ENCODE measurements at regions of chr3 and their contacts with region 1.

Region 1: GRCh38 chr3:27368831-27369607 is at the start of gene NEK10:
- DNase-seq: peak; percentile 88
- H3K4me3 Mint-ChIP-seq: peak within 1 kb of the TSS; percentile 89
- H3K27ac Mint-ChIP-seq: peak within 1 kb of the TSS; percentile 52
- H3K4me1 Mint-ChIP-seq: peaks cover 16% of the 10 kb centered on the region
- H3K27me3 Mint-ChIP-seq: peaks cover 4% of the 10 kb centered on the region
- total RNA-seq, gene NEK10: 0.54 and 0.57 TPM in 2 replicates

Region 2: DNA sequence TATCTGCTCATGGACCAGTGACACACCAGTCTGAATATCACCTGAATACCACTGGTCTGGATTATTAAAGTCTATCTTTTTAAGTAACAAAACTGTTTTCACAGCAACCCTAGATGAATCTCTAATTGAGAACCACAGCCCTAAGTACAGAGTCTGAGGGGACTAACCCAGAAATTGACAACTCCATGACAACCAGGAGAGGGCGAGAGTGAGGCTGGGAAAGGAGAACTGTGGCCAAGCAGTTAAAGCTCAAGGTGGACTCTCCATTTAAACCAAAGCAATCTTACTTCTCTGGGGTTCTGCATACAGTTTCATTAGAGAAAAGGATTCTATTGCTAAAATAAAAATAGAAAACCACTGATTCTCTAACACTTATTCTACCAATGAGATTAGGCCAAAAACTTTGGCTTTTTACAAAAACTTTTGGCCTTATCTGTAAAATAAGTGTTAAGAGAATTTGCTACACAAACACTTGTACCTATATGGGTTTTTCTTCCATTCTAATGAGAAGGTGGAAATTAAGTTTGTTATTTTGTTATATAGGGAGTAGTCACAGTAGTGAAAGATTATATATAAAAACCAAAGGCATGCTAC is 11.3 kb before region 1 on chr3:
- intact Hi-C with region 1: loop called (anchors 1 kb)
- DNase-seq: peak; percentile 35
- H3K4me3 Mint-ChIP-seq: no peak overlapping the region
- H3K27ac Mint-ChIP-seq: no peak overlapping the region
- H3K4me1 Mint-ChIP-seq: peaks cover 24% of the 10 kb centered on the region
- H3K27me3 Mint-ChIP-seq: peaks cover 16% of the 10 kb centered on the region

Region 3: GRCh38 chr3:27380433-27381357 is 11.7 kb after region 1 on chr3:
- intact Hi-C with region 1: loop called (anchors 1 kb)
- DNase-seq: no peak
- H3K4me3 Mint-ChIP-seq: no peak overlapping the region
- H3K27ac Mint-ChIP-seq: no peak overlapping the region
- H3K4me1 Mint-ChIP-seq: no peaks in the 10 kb centered on the region
- H3K27me3 Mint-ChIP-seq: no peaks in the 10 kb centered on the region

Region 4: DNA sequence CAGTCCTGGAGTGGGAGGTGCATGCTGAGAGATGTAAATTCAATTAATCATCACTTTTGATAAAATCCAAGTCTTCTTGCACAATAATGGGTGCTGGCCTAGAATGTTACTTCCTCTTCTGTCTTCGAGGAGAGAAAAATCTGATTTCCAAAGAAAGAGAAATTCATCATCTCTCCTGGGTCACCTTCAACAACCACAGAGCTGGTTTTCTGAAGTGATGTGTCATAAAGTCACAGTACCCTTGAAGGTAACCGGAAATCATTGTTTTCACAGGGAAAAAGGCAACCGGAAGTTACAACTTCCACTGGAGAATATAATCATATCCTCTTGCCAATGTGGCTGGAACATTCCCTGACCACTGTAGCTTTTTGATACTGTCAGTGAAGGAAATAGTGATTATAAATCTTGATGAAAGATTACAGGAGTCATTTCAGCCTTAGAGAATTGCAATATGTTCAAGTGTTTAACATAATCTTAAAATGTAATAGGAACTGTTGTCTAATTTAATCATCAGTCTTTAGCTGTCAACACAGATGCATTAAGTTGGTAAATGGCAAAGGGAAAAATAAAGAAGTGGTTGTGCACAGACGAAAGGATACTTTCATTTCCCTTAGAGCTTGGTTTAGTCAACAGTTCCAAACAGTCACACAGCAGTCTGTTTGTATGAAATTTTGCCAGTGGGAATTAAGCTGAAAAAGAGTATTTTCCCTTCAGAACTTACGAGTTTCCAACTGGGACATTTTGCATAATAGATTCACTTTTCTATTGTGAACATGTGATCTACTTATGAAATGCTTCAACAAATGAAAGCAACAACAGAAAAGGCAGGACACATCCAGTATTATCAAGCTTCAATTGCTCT is 221.6 kb after region 1 on chr3:
- intact Hi-C with region 1: loop called (anchors 2 kb)
- DNase-seq: no peak
- H3K4me3 Mint-ChIP-seq: peak overlapping the region; percentile 31
- H3K27ac Mint-ChIP-seq: peak overlapping the region; percentile 76
- H3K4me1 Mint-ChIP-seq: peaks cover 28% of the 10 kb centered on the region
- H3K27me3 Mint-ChIP-seq: no peaks in the 10 kb centered on the region

Region 5: GRCh38 chr3:28241221-28242160 is 872.5 kb after region 1 on chr3 and contains the start of gene CMC1:
- intact Hi-C with region 1: loop called (anchors 1 kb)
- DNase-seq: peak; percentile 87
- H3K4me3 Mint-ChIP-seq: peak within 1 kb of the TSS; percentile 94
- H3K27ac Mint-ChIP-seq: peak within 1 kb of the TSS; percentile 96
- H3K4me1 Mint-ChIP-seq: peaks cover 37% of the 10 kb centered on the region
- H3K27me3 Mint-ChIP-seq: no peaks in the 10 kb centered on the region
- total RNA-seq, gene CMC1: 29.5 and 32.5 TPM in 2 replicates

Region 6: GRCh38 chr3:28348629-28349483 is 979.8 kb after region 1 on chr3 and contains the starts of genes AZI2 and ZCWPW2:
- intact Hi-C with region 1: loop called (anchors 1 kb)
- DNase-seq: peak; percentile 90
- H3K4me3 Mint-ChIP-seq: peak within 1 kb of the TSS; percentile 98
- H3K27ac Mint-ChIP-seq: peak within 1 kb of the TSS; percentile 98
- H3K4me1 Mint-ChIP-seq: peaks cover 66% of the 10 kb centered on the region
- H3K27me3 Mint-ChIP-seq: no peaks in the 10 kb centered on the region
- total RNA-seq, gene AZI2: 43.7 and 44.8 TPM in 2 replicates
- total RNA-seq, gene ZCWPW2: 0.24 TPM in 1 of 2 replicates, not detected in the other

Measured in activated T-helper 1 cell treated with anti-CD3 and anti-CD28 coated beads, Interleukin-12 subunit alpha, Interleukin-12 subunit beta, Interleukin-2, Interleukin-4 antibody, amounts not matched to agents 30 ng/mL and 10 ng/mL and 1 ng/mL, durations not matched to agents 14 hours and 24 hours and 36 hours (primary cell).